ENCODE measurements at regions of chr9 and their contacts with region 1.

Region 1: DNA sequence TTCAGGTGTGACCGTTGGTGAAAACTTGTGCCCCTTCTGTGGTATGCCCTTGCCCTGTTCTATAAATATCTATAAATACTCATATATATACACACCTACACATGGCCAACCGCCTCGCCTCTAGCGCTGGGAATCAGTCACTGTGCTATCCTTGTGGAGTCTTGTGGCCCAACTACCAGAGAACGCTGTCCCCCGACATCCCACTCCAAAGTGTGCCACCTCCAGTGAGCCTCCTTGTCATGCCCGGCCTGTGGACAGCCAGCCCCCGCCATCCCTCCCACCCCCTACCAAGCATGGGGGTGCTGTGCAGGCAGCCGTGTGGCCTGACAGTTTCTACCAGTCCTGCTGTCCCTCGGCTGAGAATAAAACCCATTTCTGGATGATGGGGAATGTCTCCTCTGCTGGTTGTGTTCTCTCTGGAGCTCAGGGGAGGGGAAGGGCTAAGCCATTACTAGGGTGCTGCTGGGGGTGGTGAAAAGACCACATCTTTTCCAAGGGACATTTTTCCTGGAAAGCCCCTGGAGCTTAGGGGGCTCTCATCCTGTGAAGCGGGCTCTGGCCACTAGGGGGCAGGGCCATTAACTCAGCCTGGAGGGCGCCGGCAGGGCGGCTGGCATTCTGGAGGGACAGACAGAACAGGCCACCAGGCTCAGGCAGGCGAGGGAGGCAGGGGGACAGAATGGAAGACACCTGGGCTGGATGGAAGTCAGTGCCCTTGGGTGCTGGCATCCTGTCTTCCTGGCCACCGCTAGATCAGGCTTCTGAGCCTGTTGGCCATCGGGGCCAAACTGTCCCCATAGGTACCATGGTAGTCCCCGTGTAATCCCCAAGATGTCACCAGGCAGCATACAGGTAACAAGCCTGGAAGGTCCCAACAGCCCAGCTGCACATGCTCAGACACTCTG is 20.7 kb downstream of the GOLGA2 start:
- DNase-seq: no peak
- H3K4me3 ChIP-seq: no peak overlapping the region
- H3K27ac ChIP-seq: no peak overlapping the region
- H3K27me3 ChIP-seq: no peaks in the 10 kb centered on the region
- CTCF ChIP-seq: peak; percentile 93

Region 2: DNA sequence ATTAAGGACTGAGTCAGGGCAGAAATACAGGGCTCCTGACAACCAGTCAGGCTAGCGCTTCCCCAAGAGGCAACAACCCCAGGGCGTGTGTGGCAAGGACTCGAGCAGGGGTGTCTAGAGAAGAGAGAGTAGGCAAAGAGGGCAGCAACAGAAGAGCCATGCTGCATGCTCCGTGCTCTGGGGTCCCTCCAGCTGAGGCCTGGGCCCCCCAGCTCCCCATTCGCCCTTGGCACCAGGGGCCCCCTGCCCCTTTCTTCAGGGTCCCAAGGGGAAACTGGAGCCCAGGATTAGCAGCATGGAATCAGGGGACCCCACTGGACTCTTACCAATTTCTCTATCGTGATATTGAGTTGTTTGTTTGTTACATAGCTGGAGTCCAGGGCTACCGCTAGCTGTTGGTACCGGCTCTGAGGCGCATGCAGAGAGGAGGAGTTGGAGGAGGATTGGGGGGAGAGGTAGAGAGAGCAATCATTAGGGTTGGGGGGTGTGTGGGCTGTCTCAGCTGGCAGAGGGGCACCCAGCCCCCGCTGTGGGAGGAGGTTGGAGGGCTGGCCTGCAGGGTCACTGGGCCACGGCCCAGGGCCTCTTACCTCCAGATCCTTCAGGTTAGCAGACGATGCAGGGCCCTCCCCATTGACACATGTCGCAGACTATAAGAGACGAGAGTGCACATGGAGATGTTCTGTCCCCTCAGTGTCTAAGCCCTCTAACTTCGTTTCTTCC is 11.9 kb after region 1 on chr9:
- CTCF ChIA-PET with region 1: interaction called, 10 read pairs
- POLR2A ChIA-PET with region 1: interaction called, 5 read pairs
- DNase-seq: no peak
- H3K4me3 ChIP-seq: no peak overlapping the region
- H3K27ac ChIP-seq: no peak overlapping the region
- H3K27me3 ChIP-seq: no peaks in the 10 kb centered on the region
- CTCF ChIP-seq: no peak

Region 3: DNA sequence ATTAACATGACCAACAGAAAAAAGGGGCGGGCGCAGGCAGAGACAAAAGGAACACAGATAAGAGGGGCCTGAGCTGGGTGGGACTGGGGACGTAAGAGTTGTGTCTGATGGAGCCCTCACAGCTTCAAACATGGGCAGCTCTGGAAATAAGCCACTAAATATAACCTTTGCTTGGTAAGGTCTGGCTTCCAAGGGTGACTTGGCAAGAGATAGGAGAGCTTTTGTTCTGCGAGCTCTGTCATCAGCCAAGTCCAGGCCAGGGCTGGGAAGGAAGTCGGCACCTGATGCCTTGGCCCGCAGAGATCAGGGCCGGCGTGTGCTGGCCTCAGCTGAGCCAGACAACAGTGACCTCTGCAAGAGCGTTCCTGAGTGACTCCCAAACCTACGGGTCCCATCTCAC is 55.4 kb after region 1 on chr9:
- CTCF ChIA-PET with region 1: no interaction called
- POLR2A ChIA-PET with region 1: no interaction called
- DNase-seq: no peak
- H3K4me3 ChIP-seq: no peak overlapping the region
- H3K27ac ChIP-seq: no peak overlapping the region
- H3K27me3 ChIP-seq: no peaks in the 10 kb centered on the region
- CTCF ChIP-seq: no peak

Measured in AG04450 (cell line).